ENCODE measurements at regions of chr14 and their contacts with region 1.

Region 1: DNA sequence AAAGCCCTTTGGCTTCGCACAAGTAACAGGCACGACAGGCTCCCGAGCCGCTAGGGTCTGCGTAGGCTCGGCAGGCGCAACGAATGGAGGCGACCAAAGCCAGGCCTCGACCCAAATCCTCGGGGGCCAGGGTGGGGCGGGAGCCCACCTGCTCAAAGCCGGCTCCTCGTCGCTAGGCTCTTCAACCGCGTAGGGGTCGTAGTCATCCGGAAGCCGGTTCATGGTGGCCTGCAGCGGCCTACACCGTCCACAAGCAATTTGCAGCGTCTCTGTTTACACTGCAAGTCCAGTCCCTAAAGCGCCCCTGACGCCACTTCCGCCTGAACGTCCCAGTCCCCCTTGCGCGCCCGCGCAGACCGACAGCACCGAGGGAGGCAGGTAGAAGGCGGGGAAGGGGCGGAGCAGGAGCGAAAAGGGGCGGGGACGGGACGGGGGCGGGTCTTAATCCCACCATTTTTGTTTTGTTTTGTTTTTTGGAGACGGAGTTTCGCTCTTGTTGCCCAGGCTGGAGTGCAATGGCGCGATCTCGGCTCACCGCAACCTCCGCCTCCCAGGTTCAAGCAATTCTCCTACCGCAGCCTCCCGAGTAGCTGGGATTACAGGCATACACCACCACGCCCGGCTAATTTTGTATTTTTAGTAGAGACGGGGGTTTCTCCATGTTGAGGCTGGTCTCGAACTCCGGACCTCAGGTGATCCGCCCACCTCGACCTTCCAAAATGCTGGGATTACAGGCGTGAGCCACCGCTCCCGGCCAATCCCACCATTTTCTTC is at the start of gene EAPP:
- DNase-seq: peak; percentile 86
- ATAC-seq: peak; percentile 99
- H3K4me3 Mint-ChIP-seq: peak within 1 kb of the TSS; percentile 99
- H3K27ac Mint-ChIP-seq: peak within 1 kb of the TSS; percentile 97
- H3K4me1 Mint-ChIP-seq: peaks cover 34% of the 10 kb centered on the region
- H3K27me3 Mint-ChIP-seq: no peaks in the 10 kb centered on the region
- CTCF ChIP-seq: no peak
- total RNA-seq, gene EAPP: 40.7 and 43.2 TPM in 2 replicates

Region 2: GRCh38 chr14:36315159-36315853 is 1775.7 kb after region 1 on chr14:
- CTCF ChIA-PET with region 1: no interaction called
- POLR2A ChIA-PET with region 1: no interaction called
- intact Hi-C with region 1: loop called (anchors 10 kb)
- DNase-seq: no peak
- ATAC-seq: no peak
- H3K4me3 Mint-ChIP-seq: no peak overlapping the region
- H3K27ac Mint-ChIP-seq: no peak overlapping the region
- H3K4me1 Mint-ChIP-seq: peaks cover 15% of the 10 kb centered on the region
- H3K27me3 Mint-ChIP-seq: no peaks in the 10 kb centered on the region
- CTCF ChIP-seq: no peak

Measured in activated B cell treated with CpG ODN at 0.5 μM for 24 hours (primary cell).